MCF 10A (cell line): ENCODE measurements at regions of chr1 and their contacts with region 1.

Region 1: DNA sequence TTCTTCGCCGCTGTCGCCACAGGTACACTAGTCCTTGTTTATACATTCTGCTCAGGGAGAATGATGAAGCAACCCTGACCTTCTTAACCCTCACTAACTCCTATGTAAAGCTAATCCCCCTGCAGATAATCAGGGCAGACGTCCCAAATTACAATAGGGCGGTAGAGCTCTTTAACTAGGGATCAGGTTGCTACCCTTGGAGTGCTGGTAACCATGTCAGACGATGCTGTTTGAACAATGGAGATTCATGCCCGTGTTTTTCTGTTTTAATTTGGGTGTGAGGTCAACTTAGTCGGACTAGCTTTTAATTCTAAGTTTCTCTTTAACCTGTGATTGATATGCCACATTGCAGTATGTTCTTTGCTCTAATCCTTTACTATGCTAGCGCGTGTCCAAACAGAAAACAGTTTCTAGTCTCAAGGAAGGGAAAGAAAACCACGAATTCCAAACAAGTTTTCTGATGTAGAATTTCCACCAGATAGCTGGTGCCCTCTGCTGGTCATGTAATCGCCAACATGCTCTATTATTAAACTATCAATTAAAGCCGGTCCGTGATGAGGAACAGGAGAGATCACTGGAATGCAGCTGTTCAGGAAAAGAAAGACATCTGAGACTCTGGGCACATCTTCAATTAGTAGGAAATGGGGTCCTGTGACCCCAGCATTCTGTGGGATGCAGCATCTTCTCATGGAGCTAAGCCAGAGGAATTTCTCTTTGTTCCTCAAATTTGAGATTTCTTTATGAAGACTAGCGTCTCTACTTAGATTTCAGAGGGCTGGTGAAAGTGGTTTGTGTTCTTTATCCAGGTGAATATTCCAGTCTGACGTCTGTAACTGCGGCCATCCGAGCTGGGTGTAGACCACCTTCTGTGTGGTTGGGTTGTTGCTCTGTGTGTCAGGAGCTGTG is 18.3 kb upstream of the VAMP3 start:
- DNase-seq: peak; percentile 68
- H3K4me3 Mint-ChIP-seq: peak overlapping the region; percentile 50
- H3K27ac Mint-ChIP-seq: no peak overlapping the region
- H3K4me1 Mint-ChIP-seq: no peaks in the 10 kb centered on the region
- H3K27me3 Mint-ChIP-seq: peaks cover 11% of the 10 kb centered on the region
- CTCF ChIP-seq: peak; percentile 67

Region 2: DNA sequence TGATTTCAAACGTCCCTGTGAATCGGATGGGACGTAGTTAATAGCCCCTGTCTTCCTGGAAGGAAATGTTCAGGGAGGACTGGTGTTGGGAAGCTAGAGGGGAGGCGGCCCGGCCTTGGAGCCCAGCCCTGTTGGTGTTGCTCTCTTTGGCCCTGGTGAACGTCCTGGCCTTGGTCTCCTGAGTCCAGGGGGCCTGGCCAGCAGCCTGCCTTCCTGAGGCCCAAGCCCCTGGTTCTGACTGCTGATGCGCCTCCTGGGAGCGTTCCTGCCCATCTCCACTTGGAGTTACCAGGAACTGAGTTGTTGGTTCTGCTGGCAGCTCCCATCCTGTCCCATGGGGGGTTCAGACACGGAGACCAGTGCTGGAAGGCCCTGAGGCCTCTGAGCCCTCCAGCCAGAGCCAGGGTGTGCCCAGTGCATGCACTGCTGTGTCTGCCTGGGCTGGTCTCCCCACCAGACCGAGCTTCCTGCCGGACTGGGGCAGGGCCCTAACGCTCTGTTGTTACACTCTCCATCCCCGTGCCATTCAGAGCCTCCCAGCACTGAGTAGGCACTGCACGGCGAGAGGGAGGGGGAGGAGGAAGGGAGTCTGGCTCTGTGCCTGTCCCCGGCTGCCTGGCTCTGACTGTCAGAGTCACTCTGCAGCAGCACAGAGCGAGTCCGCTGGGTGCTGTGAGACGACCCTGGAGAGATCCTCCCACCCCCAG is 364.1 kb before region 1 on chr1:
- CTCF ChIA-PET with region 1: no interaction called
- POLR2A ChIA-PET with region 1: no interaction called
- intact Hi-C with region 1: no loop called
- DNase-seq: peak; percentile 34
- H3K4me3 Mint-ChIP-seq: no peak overlapping the region
- H3K27ac Mint-ChIP-seq: no peak overlapping the region
- H3K4me1 Mint-ChIP-seq: no peaks in the 10 kb centered on the region
- H3K27me3 Mint-ChIP-seq: no peaks in the 10 kb centered on the region
- CTCF ChIP-seq: no peak

Region 3: GRCh38 chr1:7539769-7540175 is 213.0 kb before region 1 on chr1:
- CTCF ChIA-PET with region 1: no interaction called
- POLR2A ChIA-PET with region 1: no interaction called
- intact Hi-C with region 1: no loop called
- DNase-seq: peak; percentile 85
- H3K4me3 Mint-ChIP-seq: no peak overlapping the region
- H3K27ac Mint-ChIP-seq: no peak overlapping the region
- H3K4me1 Mint-ChIP-seq: peaks cover 8% of the 10 kb centered on the region
- H3K27me3 Mint-ChIP-seq: no peaks in the 10 kb centered on the region
- CTCF ChIP-seq: peak; percentile 61

Region 4: GRCh38 chr1:7659514-7659913 is 93.3 kb before region 1 on chr1:
- CTCF ChIA-PET with region 1: interaction called, 646 read pairs
- POLR2A ChIA-PET with region 1: no interaction called
- intact Hi-C with region 1: no loop called
- DNase-seq: no peak
- H3K4me3 Mint-ChIP-seq: no peak overlapping the region
- H3K27ac Mint-ChIP-seq: no peak overlapping the region
- H3K4me1 Mint-ChIP-seq: no peaks in the 10 kb centered on the region
- H3K27me3 Mint-ChIP-seq: no peaks in the 10 kb centered on the region
- CTCF ChIP-seq: no peak

Region 5: GRCh38 chr1:7698641-7699040 is 54.1 kb before region 1 on chr1:
- CTCF ChIA-PET with region 1: interaction called, 13 read pairs
- POLR2A ChIA-PET with region 1: no interaction called
- intact Hi-C with region 1: no loop called
- DNase-seq: no peak
- H3K4me3 Mint-ChIP-seq: no peak overlapping the region
- H3K27ac Mint-ChIP-seq: no peak overlapping the region
- H3K4me1 Mint-ChIP-seq: no peaks in the 10 kb centered on the region
- H3K27me3 Mint-ChIP-seq: peaks cover 19% of the 10 kb centered on the region
- CTCF ChIP-seq: no peak

Region 6: GRCh38 chr1:7710859-7711258 is 41.9 kb before region 1 on chr1:
- CTCF ChIA-PET with region 1: interaction called, 18 read pairs
- POLR2A ChIA-PET with region 1: no interaction called
- intact Hi-C with region 1: no loop called
- DNase-seq: no peak
- H3K4me3 Mint-ChIP-seq: no peak overlapping the region
- H3K27ac Mint-ChIP-seq: no peak overlapping the region
- H3K4me1 Mint-ChIP-seq: no peaks in the 10 kb centered on the region
- H3K27me3 Mint-ChIP-seq: peaks cover 40% of the 10 kb centered on the region
- CTCF ChIP-seq: no peak

Region 7: DNA sequence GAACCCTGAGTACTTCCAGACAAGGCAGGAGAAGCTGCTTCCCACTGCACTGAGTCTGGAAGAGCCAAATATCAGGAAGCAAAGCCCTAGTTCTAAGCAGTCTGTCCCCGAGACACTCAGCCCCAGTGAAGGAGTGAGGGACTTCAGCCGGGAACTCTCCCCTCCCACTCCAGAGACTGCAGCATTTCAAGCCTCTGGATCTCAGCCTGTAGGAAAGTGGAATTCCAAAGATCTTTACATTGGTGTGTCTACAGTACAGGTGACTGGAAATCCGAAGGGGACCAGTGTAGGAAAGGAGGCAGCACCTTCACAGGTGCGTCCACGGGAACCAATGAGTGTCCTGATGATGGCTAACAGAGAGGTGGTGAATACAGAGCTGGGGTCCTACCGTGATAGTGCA is 14.7 kb before region 1 on chr1:
- CTCF ChIA-PET with region 1: interaction called, 28 read pairs
- POLR2A ChIA-PET with region 1: no interaction called
- intact Hi-C with region 1: no loop called
- DNase-seq: no peak
- H3K4me3 Mint-ChIP-seq: no peak overlapping the region
- H3K27ac Mint-ChIP-seq: no peak overlapping the region
- H3K4me1 Mint-ChIP-seq: no peaks in the 10 kb centered on the region
- H3K27me3 Mint-ChIP-seq: peaks cover 22% of the 10 kb centered on the region
- CTCF ChIP-seq: no peak

Region 8: DNA sequence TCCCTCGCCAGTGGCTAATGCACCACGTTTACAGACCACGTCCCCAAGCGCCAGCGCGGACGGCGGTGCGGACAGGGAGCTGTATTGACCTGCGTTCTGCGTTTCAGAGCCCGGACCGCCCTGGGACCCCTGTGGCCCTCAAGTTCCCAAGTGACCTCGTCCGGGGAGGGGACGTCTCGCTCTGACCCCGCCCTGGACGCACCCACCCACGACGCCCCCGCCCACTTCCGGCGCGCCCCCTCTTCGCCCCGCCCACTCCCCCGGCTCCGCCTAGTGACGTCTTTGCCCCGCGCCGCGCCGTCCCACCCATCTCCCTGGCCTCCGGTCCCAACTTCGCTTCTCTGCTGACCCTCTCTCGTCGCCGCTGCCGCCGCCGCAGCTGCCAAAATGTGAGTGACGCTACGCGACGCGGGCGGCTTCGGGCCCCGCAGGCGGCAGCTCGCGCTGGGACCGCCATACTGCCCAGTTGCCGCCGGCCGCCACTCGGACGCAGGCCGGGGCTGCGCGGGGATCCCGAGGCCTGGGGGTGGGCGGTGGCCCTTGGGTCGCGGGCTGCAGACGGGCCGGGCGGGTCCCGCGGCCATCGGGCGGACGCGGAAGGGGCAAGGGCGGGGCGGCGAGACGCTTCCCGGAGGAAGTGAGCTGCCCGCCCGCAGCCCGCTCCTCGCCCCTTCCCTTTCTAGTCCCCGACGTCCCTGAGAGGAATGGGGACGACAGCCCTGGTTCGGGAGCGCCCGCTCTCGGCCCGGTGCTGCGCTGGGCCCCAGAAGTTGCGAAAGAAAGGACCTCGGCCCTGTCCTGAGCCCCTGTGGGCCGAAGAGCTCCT is 18.4 kb after region 1 on chr1 and contains the start of gene VAMP3:
- CTCF ChIA-PET with region 1: interaction called, 12 read pairs
- POLR2A ChIA-PET with region 1: interaction called, 3 read pairs
- intact Hi-C with region 1: no loop called
- DNase-seq: peak; percentile 76
- H3K4me3 Mint-ChIP-seq: peak within 1 kb of the TSS; percentile 84
- H3K27ac Mint-ChIP-seq: peak within 1 kb of the TSS; percentile 80
- H3K4me1 Mint-ChIP-seq: peaks cover 10% of the 10 kb centered on the region
- H3K27me3 Mint-ChIP-seq: peaks cover 40% of the 10 kb centered on the region
- CTCF ChIP-seq: no peak
- total RNA-seq, gene VAMP3: 58.6 and 79.6 TPM in 2 replicates

Region 9: GRCh38 chr1:7795406-7795805 is 42.6 kb after region 1 on chr1:
- CTCF ChIA-PET with region 1: no interaction called
- POLR2A ChIA-PET with region 1: no interaction called
- intact Hi-C with region 1: no loop called
- DNase-seq: no peak
- H3K4me3 Mint-ChIP-seq: no peak overlapping the region
- H3K27ac Mint-ChIP-seq: no peak overlapping the region
- H3K4me1 Mint-ChIP-seq: no peaks in the 10 kb centered on the region
- H3K27me3 Mint-ChIP-seq: no peaks in the 10 kb centered on the region
- CTCF ChIP-seq: no peak

Region 10: GRCh38 chr1:7902478-7903085 is 149.8 kb after region 1 on chr1:
- CTCF ChIA-PET with region 1: interaction called, 13 read pairs
- POLR2A ChIA-PET with region 1: no interaction called
- intact Hi-C with region 1: loop called (anchors 1 kb)
- DNase-seq: peak; percentile 73
- H3K4me3 Mint-ChIP-seq: no peak overlapping the region
- H3K27ac Mint-ChIP-seq: no peak overlapping the region
- H3K4me1 Mint-ChIP-seq: no peaks in the 10 kb centered on the region
- H3K27me3 Mint-ChIP-seq: no peaks in the 10 kb centered on the region
- CTCF ChIP-seq: peak; percentile 86